A549 (cell line): ENCODE measurements at regions of chr10 and their contacts with region 1.

Region 1: DNA sequence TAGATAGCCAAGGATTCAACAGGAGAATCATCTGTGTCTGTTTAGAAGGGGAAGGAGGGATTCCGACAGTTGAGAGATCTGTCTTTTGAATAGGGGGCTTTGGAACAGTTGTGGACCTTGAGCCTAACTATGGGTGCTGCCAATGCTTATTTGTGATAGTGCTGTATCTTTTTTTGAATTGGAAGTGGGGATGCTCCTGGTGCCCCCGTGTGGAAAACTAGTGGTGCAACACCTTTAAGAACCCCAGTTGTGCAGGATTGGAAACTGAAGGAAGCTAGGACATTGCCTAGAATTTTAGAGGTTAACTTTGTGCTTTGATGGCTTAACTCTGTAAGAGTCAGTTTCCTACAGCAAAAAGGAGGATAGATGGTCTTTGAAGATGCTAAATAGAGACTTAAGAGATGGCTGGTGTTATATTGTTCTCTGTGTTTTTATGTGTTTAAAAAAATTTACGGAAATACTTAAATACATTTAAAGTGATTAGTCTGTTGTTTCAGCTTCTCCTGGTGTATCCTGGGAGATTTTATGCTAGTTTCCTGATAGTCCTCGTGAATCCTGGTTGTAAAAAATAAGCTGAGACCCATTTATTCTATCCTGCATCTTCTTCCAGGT is 69.3 kb downstream of the AP3M1 start:
- DNase-seq: peak; percentile 64 to 83
- ATAC-seq: peak; percentile 76 to 81; a peak in 5 of 6 replicates
- H3K4me3 ChIP-seq: no peak overlapping the region
- H3K27ac ChIP-seq: peak overlapping the region; percentile 77 to 80
- H3K4me1 ChIP-seq: peaks cover 67% of the 10 kb centered on the region
- CTCF ChIP-seq: peak; percentile 77
- EP300 ChIP-seq: no peak
- POLR2A ChIP-seq: no peak
- RAD21 ChIP-seq: peak; percentile 79 to 84

Region 2: DNA sequence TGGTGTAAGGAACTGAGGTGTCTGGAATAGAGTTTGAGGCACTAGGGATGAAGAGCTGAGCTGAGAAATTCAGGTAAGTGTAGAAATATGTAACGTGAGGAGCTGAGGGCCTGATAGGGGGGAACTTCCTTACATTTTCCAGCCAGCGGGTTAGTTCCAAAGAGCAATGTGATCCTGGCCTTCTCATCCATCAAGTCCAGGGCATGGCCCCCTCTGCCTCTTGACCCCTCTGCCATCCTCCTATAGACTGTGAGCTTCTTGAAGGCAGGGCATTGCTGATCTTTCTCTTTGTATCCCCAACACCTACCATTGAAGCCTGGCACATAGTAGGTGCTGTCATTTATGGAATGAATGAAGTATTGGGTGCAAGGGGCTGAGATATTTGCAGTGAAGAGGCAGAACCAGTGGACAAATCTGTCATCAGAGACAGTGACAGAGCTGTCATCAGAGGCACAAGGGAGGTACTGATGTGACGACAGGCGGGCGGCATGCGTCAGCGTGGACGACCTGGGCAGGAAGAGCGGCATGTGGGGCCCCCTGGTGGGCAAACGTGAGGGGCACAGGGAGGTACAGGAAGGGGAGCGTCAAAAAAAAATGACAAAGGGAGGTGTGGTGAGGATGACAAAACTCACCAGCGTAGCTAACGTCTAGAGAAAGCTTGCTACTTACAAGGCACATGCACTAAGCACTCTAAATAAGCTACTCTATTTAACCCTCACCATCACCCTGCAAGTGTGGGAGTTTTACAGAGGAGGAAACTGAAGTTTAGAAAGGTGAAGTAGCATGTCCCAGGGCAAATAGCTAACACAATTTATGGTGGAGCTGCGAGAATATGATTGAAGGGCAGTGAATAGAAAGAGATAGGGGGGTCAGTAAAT is 201.8 kb before region 1 on chr10:
- CTCF ChIA-PET with region 1: interaction called, 64 read pairs
- POLR2A ChIA-PET with region 1: no interaction called
- DNase-seq: peak; percentile 75 to 89
- ATAC-seq: peak; percentile 87 to 93
- H3K4me3 ChIP-seq: no peak overlapping the region
- H3K27ac ChIP-seq: peak overlapping the region in 1 of 2 experiments; percentile 65; a peak in 3 of 6 replicates
- H3K4me1 ChIP-seq: peaks cover 27% of the 10 kb centered on the region
- CTCF ChIP-seq: peak; percentile 88
- EP300 ChIP-seq: no peak
- POLR2A ChIP-seq: no peak
- RAD21 ChIP-seq: peak; percentile 80

Region 3: GRCh38 chr10:73894245-73894971 is 186.9 kb before region 1 on chr10:
- CTCF ChIA-PET with region 1: interaction called, 64 read pairs
- POLR2A ChIA-PET with region 1: no interaction called
- DNase-seq: peak in 1 of 2 experiments; percentile 58
- ATAC-seq: peak; percentile 49 to 67; a peak in 3 of 6 replicates
- H3K4me3 ChIP-seq: no peak overlapping the region
- H3K27ac ChIP-seq: peak overlapping the region; percentile 97 to 98
- H3K4me1 ChIP-seq: peaks cover 59% of the 10 kb centered on the region
- CTCF ChIP-seq: no peak
- EP300 ChIP-seq: 0 out of 5 replicates have a peak, but pooled peaks of 1 of the 2 experiments have one; percentile 16
- POLR2A ChIP-seq: no peak
- RAD21 ChIP-seq: no peak

Region 4: DNA sequence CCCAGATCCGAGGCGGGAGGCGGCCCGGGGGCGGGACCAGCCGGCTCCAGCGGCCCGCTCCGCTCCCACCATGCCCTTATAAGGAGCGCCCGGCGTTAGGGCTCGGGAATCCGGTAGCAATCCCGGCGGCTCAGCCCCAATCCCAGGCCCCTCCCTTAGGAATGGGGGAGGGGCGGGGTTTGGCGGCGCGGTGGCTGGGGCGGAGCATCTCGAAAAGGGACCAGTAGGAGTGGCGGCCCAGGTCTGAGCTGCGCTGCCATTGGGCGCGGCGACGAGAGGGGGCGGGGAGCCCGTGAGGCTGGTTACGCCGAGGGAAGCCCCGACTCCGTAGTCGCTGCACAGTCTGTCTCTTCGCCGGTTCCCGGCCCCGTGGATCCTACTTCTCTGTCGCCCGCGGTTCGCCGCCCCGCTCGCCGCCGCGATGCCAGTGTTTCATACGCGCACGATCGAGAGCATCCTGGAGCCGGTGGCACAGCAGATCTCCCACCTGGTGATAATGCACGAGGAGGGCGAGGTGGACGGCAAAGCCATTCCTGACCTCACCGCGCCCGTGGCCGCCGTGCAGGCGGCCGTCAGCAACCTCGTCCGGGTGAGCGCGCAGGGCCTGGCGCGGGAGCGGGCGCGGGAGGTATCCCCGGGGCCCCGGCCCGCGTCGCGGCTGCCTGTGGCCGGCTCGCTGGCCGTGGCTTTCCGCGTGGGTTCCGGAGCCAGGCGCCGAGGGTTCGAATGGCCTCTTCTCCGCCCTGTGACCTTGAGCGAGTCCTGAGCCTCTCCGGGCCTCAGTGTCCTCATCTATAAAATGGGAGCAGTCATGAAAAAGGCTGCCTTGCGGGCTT is 83.3 kb before region 1 on chr10 and contains the start of gene VCL:
- CTCF ChIA-PET with region 1: interaction called, 17 read pairs
- POLR2A ChIA-PET with region 1: interaction called, 11 read pairs
- DNase-seq: peak; percentile 86 to 98
- ATAC-seq: peak; percentile 94 to 95
- H3K4me3 ChIP-seq: peak within 1 kb of the TSS; percentile 97
- H3K27ac ChIP-seq: peak within 1 kb of the TSS; percentile 95
- H3K4me1 ChIP-seq: peaks cover 36% of the 10 kb centered on the region
- CTCF ChIP-seq: no peak
- EP300 ChIP-seq: no peak
- POLR2A ChIP-seq: peak; percentile 99
- RAD21 ChIP-seq: 0 out of 5 replicates have a peak, but pooled peaks of 1 of the 2 experiments have one; percentile 16
- polyA plus RNA-seq, gene VCL: 101 and 112 TPM in 2 replicates

Region 5: DNA sequence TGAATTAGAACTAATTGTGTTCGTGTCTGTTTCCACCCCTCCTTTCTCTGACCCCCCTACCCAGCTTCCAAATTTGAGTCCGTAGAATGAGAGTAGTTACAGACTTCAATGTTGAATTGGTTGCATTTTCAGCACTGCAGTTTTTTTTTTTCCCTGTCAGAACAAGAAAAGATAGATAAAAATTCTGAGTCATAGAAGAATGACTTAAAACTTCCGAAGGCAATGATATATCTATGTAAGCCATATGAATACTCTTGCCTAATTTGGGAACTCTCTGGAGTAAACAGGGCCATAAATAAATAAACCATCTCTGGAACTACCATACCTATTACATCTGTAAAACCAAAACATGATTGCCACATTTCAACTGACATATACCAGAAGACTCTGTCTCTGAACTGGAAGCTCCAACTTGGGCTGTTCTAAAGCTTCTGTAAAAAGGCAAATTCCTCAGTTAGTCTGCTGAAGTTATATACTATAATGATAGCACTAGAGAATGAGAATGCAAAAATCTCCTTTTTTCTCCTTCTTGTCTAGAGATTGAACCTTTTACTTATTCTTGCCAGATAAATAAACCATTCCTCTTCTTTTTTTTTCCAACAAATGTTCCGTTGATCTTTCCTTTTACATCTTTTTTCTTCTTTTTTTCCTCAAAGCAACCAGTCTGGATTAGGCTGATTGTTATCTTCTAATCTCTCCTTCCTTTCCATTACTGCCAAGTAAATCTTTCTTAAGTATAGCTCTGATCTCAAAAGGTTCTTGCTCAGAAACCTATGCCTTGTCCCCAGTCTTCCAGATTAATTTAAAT is 59.8 kb before region 1 on chr10:
- CTCF ChIA-PET with region 1: interaction called, 19 read pairs
- POLR2A ChIA-PET with region 1: no interaction called
- DNase-seq: no peak
- ATAC-seq: peak; percentile 17 to 45; a peak in 4 of 6 replicates
- H3K4me3 ChIP-seq: no peak overlapping the region
- H3K27ac ChIP-seq: peak overlapping the region in 1 of 2 experiments; percentile 38; a peak in 2 of 6 replicates
- H3K4me1 ChIP-seq: peaks cover 63% of the 10 kb centered on the region
- CTCF ChIP-seq: no peak
- EP300 ChIP-seq: no peak
- POLR2A ChIP-seq: no peak
- RAD21 ChIP-seq: no peak

Region 6: DNA sequence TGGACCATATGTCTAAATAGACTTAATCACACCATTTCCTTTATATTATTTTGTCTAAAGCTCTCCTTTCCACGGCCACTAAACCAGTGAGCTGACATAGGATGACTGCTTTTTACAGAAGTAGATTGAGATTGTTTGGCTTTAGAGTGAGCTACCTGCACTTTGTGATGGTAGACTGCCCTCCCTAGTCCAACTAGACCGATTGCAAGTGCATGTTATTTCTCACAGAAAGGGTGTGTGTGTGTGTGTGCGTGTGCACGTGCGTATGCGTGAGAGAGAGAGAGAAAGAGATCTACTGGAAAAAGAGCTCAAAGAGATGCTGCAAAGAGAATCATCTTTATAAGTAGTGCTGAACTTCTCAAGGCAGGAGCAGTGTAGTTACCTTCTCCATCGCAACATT is 22.6 kb before region 1 on chr10:
- CTCF ChIA-PET with region 1: interaction called, 20 read pairs
- POLR2A ChIA-PET with region 1: interaction called, 3 read pairs
- DNase-seq: peak in 1 of 2 experiments; percentile 61
- ATAC-seq: no peak
- H3K4me3 ChIP-seq: no peak overlapping the region
- H3K27ac ChIP-seq: peak overlapping the region; percentile 10 to 77; a peak in 3 of 6 replicates
- H3K4me1 ChIP-seq: peaks cover 49% of the 10 kb centered on the region
- CTCF ChIP-seq: no peak
- EP300 ChIP-seq: no peak
- POLR2A ChIP-seq: no peak
- RAD21 ChIP-seq: peak in 1 of 2 experiments; percentile 22; a peak in 1 of 5 replicates

Region 7: DNA sequence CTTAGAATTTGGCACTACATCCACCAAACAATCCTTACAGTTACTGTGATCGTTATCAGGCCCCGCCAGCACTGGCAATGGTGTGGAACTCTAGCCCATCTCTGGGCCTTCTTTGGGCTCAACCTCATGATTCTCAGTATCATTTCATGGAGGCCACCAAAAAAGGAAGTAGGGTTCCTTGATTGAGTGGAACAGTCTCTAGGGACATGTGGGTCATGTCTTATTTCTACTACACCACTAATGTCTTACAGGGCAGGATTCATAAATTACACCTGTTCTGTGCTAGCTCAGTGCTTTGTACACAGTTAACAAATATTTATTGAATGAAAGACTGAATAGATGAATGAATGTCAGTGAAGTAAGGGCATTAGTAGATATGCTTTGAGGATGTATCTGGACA is 15.5 kb after region 1 on chr10:
- CTCF ChIA-PET with region 1: interaction called, 23 read pairs
- POLR2A ChIA-PET with region 1: no interaction called
- DNase-seq: no peak
- ATAC-seq: no peak
- H3K4me3 ChIP-seq: no peak overlapping the region
- H3K27ac ChIP-seq: no peak overlapping the region
- H3K4me1 ChIP-seq: peaks cover 9% of the 10 kb centered on the region; the same call in 2 of the 3 replicates
- CTCF ChIP-seq: no peak
- EP300 ChIP-seq: no peak
- POLR2A ChIP-seq: no peak
- RAD21 ChIP-seq: no peak

Region 8: GRCh38 chr10:74824184-74824899 is 743.0 kb after region 1 on chr10:
- CTCF ChIA-PET with region 1: no interaction called
- POLR2A ChIA-PET with region 1: no interaction called
- DNase-seq: no peak
- ATAC-seq: no peak
- H3K4me3 ChIP-seq: peak overlapping the region; percentile 97
- H3K27ac ChIP-seq: peak overlapping the region; percentile 97 to 98
- H3K4me1 ChIP-seq: peaks cover 26% of the 10 kb centered on the region
- CTCF ChIP-seq: no peak
- EP300 ChIP-seq: no peak
- POLR2A ChIP-seq: no peak
- RAD21 ChIP-seq: no peak